ENCODE measurements at regions of chr12 and their contacts with region 1.

Region 1: GRCh38 chr12:26768611-26769603 is 64.1 kb downstream of the ITPR2 start:
- DNase-seq: peak; percentile 98
- ATAC-seq: peak; percentile 90
- H3K4me3 ChIP-seq: peak overlapping the region in 2 of 3 experiments; percentile 11 to 22; a peak in 3 of 6 replicates
- H3K27ac ChIP-seq: peak overlapping the region; percentile 88
- H3K4me1 ChIP-seq: peaks cover 96% of the 10 kb centered on the region
- H3K27me3 ChIP-seq: no peaks in the 10 kb centered on the region
- CTCF ChIP-seq: no peak
- EP300 ChIP-seq: peak; percentile 95 to 100; a peak in 3 of 4 replicates
- POLR2A ChIP-seq: peak; percentile 24 to 35; a peak in 1 of 4 replicates
- RAD21 ChIP-seq: peak; percentile 16; the same call in 1 of the 2 replicates

Region 2: GRCh38 chr12:25482625-25483024 is 1286.3 kb before region 1 on chr12:
- CTCF ChIA-PET with region 1: no interaction called
- POLR2A ChIA-PET with region 1: no interaction called
- in situ Hi-C with region 1: no loop called
- intact Hi-C with region 1: no loop called
- DNase-seq: no peak
- ATAC-seq: no peak
- H3K4me3 ChIP-seq: no peak overlapping the region
- H3K27ac ChIP-seq: no peak overlapping the region
- H3K4me1 ChIP-seq: no peaks in the 10 kb centered on the region
- H3K27me3 ChIP-seq: no peaks in the 10 kb centered on the region
- CTCF ChIP-seq: no peak
- EP300 ChIP-seq: no peak
- POLR2A ChIP-seq: no peak
- RAD21 ChIP-seq: no peak

Region 3: DNA sequence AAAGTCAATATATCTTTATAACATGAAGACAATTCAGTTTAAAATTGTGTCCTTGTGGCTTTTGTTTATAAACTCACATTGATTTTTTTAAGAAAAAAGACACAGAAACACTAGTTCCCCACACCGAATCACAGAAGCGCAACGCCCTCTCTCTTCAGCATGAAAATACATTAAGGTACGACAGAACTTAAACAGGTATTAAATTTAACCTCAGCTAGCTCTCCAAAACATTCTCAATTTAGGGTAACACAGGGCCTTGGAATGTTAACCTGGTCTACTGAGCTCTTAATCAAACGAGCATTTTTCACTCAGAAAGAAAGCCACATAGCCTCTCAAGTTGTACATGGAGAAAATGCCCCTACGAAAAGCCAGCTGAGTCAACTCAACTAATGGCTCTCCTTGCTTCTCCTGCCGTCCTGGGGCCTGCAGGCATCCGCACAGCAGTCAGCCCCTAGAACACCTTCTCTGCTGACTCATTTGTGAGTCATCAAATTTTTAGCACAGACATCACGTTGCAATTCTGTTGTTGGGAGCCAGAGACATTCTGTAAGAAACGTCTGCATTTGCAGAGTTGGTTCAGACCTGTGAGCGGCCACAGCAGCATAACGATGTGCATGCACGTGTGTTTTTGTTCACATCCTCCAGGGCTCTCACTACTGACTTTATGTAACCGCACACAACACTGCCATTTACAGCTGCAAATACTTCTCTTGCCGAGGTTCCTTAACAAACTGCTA is 77.5 kb before region 1 on chr12:
- CTCF ChIA-PET with region 1: no interaction called
- POLR2A ChIA-PET with region 1: no interaction called
- in situ Hi-C with region 1: no loop called
- intact Hi-C with region 1: no loop called
- DNase-seq: peak; percentile 24
- ATAC-seq: no peak
- H3K4me3 ChIP-seq: no peak overlapping the region
- H3K27ac ChIP-seq: no peak overlapping the region
- H3K4me1 ChIP-seq: peaks cover 45% of the 10 kb centered on the region
- H3K27me3 ChIP-seq: no peaks in the 10 kb centered on the region
- CTCF ChIP-seq: no peak
- EP300 ChIP-seq: no peak
- POLR2A ChIP-seq: no peak
- RAD21 ChIP-seq: no peak

Region 4: GRCh38 chr12:26701604-26702215 is 67.2 kb before region 1 on chr12:
- CTCF ChIA-PET with region 1: no interaction called
- POLR2A ChIA-PET with region 1: no interaction called
- in situ Hi-C with region 1: no loop called
- intact Hi-C with region 1: no loop called
- DNase-seq: peak; percentile 23
- ATAC-seq: no peak
- H3K4me3 ChIP-seq: no peak overlapping the region
- H3K27ac ChIP-seq: no peak overlapping the region
- H3K4me1 ChIP-seq: peaks cover 19% of the 10 kb centered on the region
- H3K27me3 ChIP-seq: no peaks in the 10 kb centered on the region
- CTCF ChIP-seq: peak; percentile 39
- EP300 ChIP-seq: no peak
- POLR2A ChIP-seq: no peak
- RAD21 ChIP-seq: no peak

Region 5: GRCh38 chr12:26713885-26714383 is 55.0 kb before region 1 on chr12:
- CTCF ChIA-PET with region 1: no interaction called
- POLR2A ChIA-PET with region 1: no interaction called
- in situ Hi-C with region 1: no loop called
- intact Hi-C with region 1: loop called (anchors 10 kb)
- DNase-seq: no peak
- ATAC-seq: no peak
- H3K4me3 ChIP-seq: no peak overlapping the region
- H3K27ac ChIP-seq: no peak overlapping the region
- H3K4me1 ChIP-seq: no peaks in the 10 kb centered on the region
- H3K27me3 ChIP-seq: no peaks in the 10 kb centered on the region
- CTCF ChIP-seq: no peak
- EP300 ChIP-seq: no peak
- POLR2A ChIP-seq: no peak
- RAD21 ChIP-seq: no peak

Region 6: DNA sequence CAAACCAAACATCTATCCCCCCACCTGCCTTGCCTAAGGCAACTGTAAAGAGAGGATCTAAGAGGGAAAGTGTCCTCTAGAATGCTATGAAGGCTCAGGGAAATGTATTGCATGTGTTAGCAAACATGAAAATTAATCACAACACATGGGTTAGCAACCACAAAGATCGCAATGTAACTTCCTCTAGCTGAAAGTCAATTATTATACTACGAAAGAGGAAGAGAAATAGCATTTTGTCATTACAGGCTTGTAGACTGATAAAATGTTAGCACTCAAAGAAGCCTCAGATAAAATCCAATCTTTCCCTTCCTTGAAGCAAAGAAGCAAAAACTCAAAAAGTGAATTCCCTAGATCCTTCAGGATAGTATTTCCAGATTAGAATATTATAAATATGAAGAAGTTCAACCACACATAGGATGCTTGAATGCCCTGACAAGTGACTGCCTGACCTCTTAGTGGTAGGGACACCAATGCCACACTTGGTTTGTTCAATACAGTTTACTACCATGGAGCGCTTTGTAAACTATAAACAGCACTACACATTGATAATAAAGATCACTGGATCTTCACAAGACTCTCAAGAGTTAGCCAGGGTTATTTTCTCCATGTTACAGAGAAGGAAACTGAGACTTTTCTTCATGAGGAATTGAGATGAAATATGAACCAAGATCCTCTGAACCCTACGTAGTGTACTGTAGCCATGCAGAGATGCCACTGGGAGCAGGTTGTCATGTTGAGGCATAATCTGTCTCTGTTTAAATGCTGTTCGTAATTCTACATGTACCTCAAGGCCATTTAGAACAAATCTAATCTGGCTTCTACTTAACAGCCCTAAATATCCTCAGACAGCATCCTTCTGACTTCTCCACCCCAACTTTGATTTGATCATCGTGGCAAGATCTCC is 36.6 kb before region 1 on chr12:
- CTCF ChIA-PET with region 1: no interaction called
- POLR2A ChIA-PET with region 1: interaction called, 78 read pairs
- in situ Hi-C with region 1: no loop called
- intact Hi-C with region 1: loop called (anchors 1 kb)
- DNase-seq: no peak
- ATAC-seq: no peak
- H3K4me3 ChIP-seq: no peak overlapping the region
- H3K27ac ChIP-seq: peak overlapping the region; percentile 52
- H3K4me1 ChIP-seq: peaks cover 99% of the 10 kb centered on the region
- H3K27me3 ChIP-seq: no peaks in the 10 kb centered on the region
- CTCF ChIP-seq: no peak
- EP300 ChIP-seq: no peak
- POLR2A ChIP-seq: no peak
- RAD21 ChIP-seq: no peak

Region 7: DNA sequence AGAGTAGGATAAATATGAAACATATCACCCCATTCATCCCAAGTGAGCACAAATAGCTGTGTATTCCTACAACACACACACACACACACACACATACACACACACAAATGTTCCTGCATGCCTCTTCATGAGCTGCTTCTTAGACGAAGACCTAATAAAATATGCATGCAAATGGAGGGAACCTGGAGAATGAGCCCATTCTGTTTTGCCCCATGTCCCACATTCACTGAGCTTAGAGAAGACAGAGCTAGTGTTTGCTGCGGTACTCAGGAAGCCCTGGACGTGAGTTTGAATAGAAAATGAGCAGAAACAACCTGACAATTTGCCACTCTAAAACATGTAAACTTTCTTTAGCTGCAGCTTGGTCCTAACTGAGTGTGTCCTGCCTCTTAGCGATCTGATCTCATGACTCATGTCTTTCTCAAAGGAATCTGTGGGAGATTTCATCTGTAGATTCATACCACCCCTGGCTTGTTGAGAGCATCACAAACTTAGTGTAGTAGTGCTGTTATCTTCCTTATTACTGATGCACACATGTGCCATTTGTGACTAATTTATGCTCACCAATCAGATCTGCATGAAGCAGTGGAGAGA is 22.7 kb before region 1 on chr12:
- CTCF ChIA-PET with region 1: no interaction called
- POLR2A ChIA-PET with region 1: interaction called, 30 read pairs
- in situ Hi-C with region 1: no loop called
- intact Hi-C with region 1: loop called (anchors 1 kb)
- DNase-seq: no peak
- ATAC-seq: no peak
- H3K4me3 ChIP-seq: no peak overlapping the region; a peak in 1 of 6 replicates
- H3K27ac ChIP-seq: peak overlapping the region; percentile 94
- H3K4me1 ChIP-seq: peaks cover 100% of the 10 kb centered on the region
- H3K27me3 ChIP-seq: no peaks in the 10 kb centered on the region; a peak in 1 of 5 replicates
- CTCF ChIP-seq: no peak
- EP300 ChIP-seq: no peak
- POLR2A ChIP-seq: no peak
- RAD21 ChIP-seq: no peak

Region 8: DNA sequence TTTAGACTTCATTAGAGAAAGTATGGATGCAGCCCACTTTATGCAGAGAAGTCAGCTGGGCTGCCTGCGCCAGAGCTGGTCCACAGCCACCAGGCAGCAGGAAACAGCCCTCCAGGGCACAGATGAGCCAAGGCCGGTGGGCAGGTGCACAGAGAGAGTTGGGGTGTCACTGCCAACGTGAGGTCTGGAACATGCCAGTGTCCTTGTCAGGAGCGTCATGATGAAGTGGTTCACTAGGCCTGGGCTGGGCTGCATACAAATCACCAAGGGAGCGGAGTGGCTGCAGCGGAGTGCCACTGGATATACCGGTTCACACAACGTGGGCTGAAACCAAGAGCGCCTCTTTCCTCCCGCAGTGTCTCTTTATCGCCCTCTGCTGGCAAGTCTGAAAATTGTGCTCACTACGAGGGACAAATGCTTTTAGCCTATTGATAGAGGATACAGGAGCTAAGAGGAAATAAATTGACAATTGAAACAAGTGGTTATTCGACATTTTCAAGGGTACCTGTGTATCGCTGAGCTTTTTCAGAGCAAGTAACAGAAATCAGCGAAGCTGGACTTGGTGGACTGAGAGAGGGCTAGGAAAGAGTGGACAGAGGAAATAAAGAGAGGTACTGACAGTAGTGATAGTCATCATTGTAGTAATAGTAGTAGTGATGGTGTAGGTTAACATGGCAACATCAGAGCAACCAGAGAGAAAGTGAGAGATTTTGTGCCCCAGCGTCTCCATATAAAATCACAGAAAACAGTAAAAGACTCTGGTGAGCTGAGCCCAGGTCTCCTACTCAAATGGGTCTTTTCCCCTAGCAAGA is 116.1 kb after region 1 on chr12:
- CTCF ChIA-PET with region 1: no interaction called
- POLR2A ChIA-PET with region 1: no interaction called
- in situ Hi-C with region 1: no loop called
- intact Hi-C with region 1: loop called (anchors 10 kb)
- DNase-seq: peak; percentile 78
- ATAC-seq: peak; percentile 95
- H3K4me3 ChIP-seq: peak overlapping the region; percentile 32 to 65 (median 35); a peak in 4 of 6 replicates
- H3K27ac ChIP-seq: no peak overlapping the region
- H3K4me1 ChIP-seq: 0 out of 2 replicates have a peak, but pooled peaks cover 5% of the 10 kb centered on the region
- H3K27me3 ChIP-seq: no peaks in the 10 kb centered on the region
- CTCF ChIP-seq: peak; percentile 95
- EP300 ChIP-seq: no peak
- POLR2A ChIP-seq: no peak
- RAD21 ChIP-seq: peak; percentile 79

Measured in HepG2 (cell line).